ENCODE measurements at regions of chr16 and their contacts with region 1.

Region 1: DNA sequence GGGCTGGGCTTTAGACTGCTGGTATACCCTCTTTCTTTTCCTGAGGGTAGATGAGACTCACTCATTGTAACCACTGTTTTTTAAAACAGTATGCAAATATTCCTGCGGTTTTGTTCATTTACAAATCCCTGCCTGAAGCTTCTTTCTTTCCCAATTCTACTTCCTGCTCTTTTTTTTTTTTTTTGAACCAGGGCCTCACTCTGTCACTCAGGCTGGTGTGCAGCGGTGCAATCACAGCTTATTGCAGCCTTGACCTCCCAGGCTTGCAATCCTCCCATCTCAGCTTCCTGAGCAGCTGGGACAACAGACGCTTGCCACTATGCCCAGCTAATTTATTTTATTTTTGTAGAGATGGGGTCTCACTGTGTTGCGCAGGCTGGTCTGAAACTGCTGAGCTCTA is 8.0 kb upstream of the SULT1A1 start:
- DNase-seq: no peak
- H3K4me3 ChIP-seq: no peak overlapping the region
- H3K27ac ChIP-seq: no peak overlapping the region
- H3K4me1 ChIP-seq: peaks cover 0 to 12% (median 6%) of the 10 kb centered on the region in 4 donors
- H3K27me3 ChIP-seq: no peaks in the 10 kb centered on the region
- CTCF ChIP-seq: no peak
- EP300 ChIP-seq: no peak
- POLR2A ChIP-seq: no peak

Region 2: DNA sequence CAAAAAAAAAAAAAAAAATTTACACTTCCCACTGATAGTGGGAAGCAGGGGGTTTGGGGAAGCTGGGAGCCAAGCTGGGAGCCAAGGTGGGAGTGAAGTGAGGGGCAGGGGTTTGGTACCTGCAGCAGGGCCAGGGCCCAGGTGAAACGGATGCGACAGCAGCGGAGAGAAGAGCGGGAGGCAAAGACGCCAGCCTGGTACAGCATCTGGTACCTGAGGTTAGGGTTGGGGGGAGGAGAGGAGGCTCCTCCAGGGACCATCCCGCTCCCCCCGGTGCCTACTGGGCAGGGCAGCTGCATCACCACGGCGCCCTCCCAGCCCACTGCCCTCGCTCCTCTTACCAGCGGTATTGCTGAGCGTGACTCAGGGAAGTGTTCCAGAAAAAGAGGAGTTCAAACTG is 135.9 kb before region 1 on chr16:
- in situ Hi-C with region 1: no loop called
- intact Hi-C with region 1: loop called (anchors 5 kb)
- DNase-seq: no peak
- H3K4me3 ChIP-seq: no peak overlapping the region
- H3K27ac ChIP-seq: peak overlapping the region; percentile 82 to 88 (median 84)
- H3K4me1 ChIP-seq: peaks cover 6 to 40% (median 17%) of the 10 kb centered on the region in 4 donors
- H3K27me3 ChIP-seq: no peaks in the 10 kb centered on the region
- CTCF ChIP-seq: no peak
- EP300 ChIP-seq: no peak
- POLR2A ChIP-seq: no peak

Region 3: GRCh38 chr16:28553776-28554633 is 63.9 kb before region 1 on chr16 and contains the start of gene SGF29:
- in situ Hi-C with region 1: no loop called
- intact Hi-C with region 1: no loop called
- DNase-seq: peak; percentile 95
- H3K4me3 ChIP-seq: peak within 1 kb of the TSS; percentile 62 to 80 (median 66)
- H3K27ac ChIP-seq: peak within 1 kb of the TSS; percentile 97 to 99 (median 98)
- H3K4me1 ChIP-seq: peaks cover 5 to 28% (median 13%) of the 10 kb centered on the region in 4 donors
- H3K27me3 ChIP-seq: no peaks in the 10 kb centered on the region
- CTCF ChIP-seq: peak in 2 of 5 experiments; percentile 39
- EP300 ChIP-seq: no peak
- POLR2A ChIP-seq: peak; percentile 94
- total RNA-seq, gene SGF29: 22.1 to 95.0 (median 32.1) TPM

Region 4: DNA sequence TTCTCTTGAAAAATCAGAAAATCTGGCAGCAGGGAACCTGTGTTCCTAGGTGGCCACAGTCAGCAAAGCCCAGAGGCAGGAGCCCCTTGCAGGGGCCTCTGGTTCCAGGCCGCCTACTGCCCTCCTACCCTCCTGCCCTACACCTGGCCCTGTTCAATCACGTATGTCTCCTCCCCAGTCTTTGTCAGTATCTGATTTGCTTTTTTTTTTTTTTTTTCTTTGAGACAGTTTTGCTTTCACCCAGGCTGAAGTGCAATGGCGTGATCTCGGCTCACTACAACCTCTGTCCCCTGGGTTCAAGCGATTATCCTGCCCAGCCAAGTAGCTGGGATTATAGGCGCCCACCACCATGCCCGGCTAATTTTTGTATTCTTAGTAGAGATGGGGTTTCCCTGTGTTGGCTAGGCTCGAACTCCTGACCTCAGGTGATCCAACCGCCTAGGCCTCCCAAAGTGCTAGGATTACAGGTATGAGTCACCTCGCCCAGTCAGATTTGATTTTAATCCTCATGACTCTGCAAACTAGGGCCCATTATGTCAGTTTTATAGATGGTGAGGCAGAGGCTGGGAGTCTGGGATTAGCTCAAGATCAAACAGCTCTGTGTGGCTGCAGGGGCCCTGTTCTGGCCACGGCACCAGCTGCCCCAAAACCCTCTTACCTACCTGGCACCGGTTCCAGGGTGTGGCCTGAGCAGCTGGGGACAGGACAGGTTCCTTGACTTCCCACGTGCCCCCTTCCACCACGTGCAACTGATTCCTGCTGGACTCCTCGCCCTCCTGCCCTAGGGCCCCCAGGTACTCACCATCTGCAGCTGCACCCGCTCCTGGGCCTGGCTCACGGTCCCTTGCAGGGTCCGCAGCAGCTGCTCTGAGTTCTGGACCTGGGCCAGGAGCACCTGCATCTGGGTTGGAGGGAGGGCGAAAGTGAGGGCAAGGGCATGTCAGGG is 292.5 kb after region 1 on chr16:
- in situ Hi-C with region 1: no loop called
- intact Hi-C with region 1: no loop called
- DNase-seq: peak; percentile 74
- H3K4me3 ChIP-seq: no peak overlapping the region
- H3K27ac ChIP-seq: peak overlapping the region; percentile 48 to 65 (median 54)
- H3K4me1 ChIP-seq: peaks cover 0 to 11% (median 5%) of the 10 kb centered on the region in 4 donors
- H3K27me3 ChIP-seq: no peaks in the 10 kb centered on the region
- CTCF ChIP-seq: no peak
- EP300 ChIP-seq: no peak
- POLR2A ChIP-seq: no peak